ENCODE measurements at regions of chr9 and their contacts with region 1.

Region 1: DNA sequence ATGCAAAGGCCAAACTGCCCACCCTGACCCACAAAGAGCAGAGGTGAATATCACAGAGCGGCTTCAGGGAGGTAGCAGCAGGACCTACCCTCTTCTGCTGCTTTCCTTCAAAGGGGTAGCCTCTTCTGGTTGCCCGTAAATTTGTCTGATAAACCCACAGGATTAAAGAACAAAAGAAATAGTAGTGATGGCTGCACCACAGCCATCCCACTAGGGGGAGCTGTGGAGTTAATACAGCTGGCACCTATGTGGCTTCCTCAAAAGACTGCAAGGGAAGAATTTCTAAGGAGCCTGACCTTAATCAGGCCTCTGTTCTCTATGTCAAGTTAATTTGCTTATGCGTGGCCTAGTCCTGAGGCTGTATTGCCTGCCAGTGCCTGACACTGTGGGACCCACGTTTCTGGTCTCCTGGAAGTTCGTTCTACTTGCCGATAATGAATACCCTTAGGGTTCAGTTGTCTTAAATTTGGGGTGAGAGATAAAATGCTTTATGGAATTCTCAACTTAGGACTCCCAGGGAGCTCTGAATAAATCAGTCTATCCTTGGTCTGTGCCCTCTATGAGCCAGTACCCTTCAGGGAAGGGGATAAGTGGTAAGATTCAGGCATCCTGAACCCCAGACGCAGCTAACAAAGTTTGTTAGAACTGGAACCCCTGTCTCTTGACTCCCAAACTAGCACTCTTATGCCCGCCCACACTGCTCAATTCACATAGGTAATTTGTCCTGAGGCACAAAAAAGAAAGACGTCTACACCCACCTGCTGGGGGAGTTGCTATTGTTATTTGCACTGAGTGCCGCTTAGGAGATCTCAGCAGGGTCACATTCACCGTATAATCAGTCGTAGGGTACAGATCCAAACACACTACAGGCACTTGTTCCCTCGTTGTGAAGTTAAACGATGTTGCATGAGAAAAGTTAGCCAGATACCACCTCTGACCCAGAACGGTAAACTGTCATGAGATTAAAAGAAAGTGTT is 77.1 kb downstream of the SUSD1 start:
- DNase-seq: peak; percentile 78
- H3K4me3 ChIP-seq: no peak overlapping the region
- H3K27ac ChIP-seq: no peak overlapping the region
- H3K4me1 ChIP-seq: peaks cover 7% of the 10 kb centered on the region
- H3K27me3 ChIP-seq: no peaks in the 10 kb centered on the region
- CTCF ChIP-seq: peak; percentile 82 to 94 (median 84)
- POLR2A ChIP-seq: no peak

Region 2: GRCh38 chr9:112333639-112334431 is 235.8 kb after region 1 on chr9:
- intact Hi-C with region 1: loop called (anchors 10 kb)
- DNase-seq: peak; percentile 95
- H3K4me3 ChIP-seq: peak overlapping the region; percentile 95 to 100
- H3K27ac ChIP-seq: peak overlapping the region; percentile 99 to 100
- H3K4me1 ChIP-seq: peaks cover 8% of the 10 kb centered on the region
- H3K27me3 ChIP-seq: no peaks in the 10 kb centered on the region
- CTCF ChIP-seq: peak; percentile 40 to 56 (median 56)
- POLR2A ChIP-seq: no peak

Measured in testis (tissue), 5 donors.